ENCODE measurements at regions of chrX and their contacts with region 1.

Region 1: DNA sequence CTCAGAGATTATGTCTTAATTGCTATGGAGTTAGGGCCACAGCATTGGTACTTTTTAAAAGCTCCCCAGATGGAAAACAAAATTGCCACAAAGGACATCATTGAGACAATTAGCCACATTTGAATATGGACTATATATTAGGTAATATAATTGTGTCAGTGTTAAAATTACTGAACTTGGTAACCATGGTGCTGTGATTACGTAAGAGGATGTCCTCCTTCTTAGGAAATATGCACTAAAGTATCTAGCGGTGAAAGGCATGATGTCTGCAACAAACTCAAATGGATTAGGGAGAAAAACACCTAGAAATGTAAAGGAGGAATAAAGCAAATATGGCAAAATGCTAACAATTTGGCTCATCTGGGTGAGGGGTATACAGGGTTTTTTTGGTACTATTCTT is 89.9 kb upstream of the PAK3 start:
- DNase-seq: no peak
- ATAC-seq: no peak
- H3K4me3 ChIP-seq: no peak overlapping the region
- H3K27ac ChIP-seq: no peak overlapping the region
- H3K4me1 ChIP-seq: no peaks in the 10 kb centered on the region
- CTCF ChIP-seq: no peak
- EP300 ChIP-seq: no peak
- POLR2A ChIP-seq: no peak
- RAD21 ChIP-seq: no peak

Region 2: DNA sequence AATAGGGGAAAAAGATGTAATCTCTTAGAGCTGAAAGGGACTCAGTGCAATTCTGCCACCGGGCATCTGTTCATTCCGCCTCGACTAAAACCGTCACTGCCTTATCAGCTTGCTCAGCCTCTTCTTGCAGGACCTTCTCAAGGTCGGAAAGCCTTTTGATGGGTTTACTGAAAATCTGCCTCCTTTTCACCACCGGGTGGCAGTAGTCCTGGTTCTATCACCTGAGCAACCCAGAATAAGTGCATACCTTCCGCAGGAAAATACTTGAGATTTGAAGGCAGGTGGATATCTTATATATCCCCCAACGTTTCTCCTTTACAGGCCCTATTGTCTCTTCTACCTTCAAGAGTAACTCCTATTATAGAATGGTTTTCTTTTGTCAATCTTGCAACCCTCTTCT is 13.5 kb before region 1 on chrX:
- CTCF ChIA-PET with region 1: interaction called, 10 read pairs
- POLR2A ChIA-PET with region 1: no interaction called
- DNase-seq: peak; percentile 10 to 21
- ATAC-seq: peak; percentile 56 to 71; a peak in 4 of 6 replicates
- H3K4me3 ChIP-seq: no peak overlapping the region
- H3K27ac ChIP-seq: no peak overlapping the region
- H3K4me1 ChIP-seq: no peaks in the 10 kb centered on the region
- CTCF ChIP-seq: peak; percentile 48
- EP300 ChIP-seq: no peak
- POLR2A ChIP-seq: no peak
- RAD21 ChIP-seq: peak; percentile 14 to 35; a peak in 1 of 5 replicates

Measured in A549 (cell line).